ENCODE measurements at regions of chr7 and their contacts with region 1.

Region 1: GRCh38 chr7:101815835-101816493 is 1.5 kb upstream of the CUX1 start:
- DNase-seq: peak; percentile 73
- H3K4me3 Mint-ChIP-seq: peak overlapping the region; percentile 76
- H3K27ac Mint-ChIP-seq: peak overlapping the region; percentile 74
- H3K4me1 Mint-ChIP-seq: peaks cover 20% of the 10 kb centered on the region
- H3K27me3 Mint-ChIP-seq: peaks cover 2% of the 10 kb centered on the region

Region 2: DNA sequence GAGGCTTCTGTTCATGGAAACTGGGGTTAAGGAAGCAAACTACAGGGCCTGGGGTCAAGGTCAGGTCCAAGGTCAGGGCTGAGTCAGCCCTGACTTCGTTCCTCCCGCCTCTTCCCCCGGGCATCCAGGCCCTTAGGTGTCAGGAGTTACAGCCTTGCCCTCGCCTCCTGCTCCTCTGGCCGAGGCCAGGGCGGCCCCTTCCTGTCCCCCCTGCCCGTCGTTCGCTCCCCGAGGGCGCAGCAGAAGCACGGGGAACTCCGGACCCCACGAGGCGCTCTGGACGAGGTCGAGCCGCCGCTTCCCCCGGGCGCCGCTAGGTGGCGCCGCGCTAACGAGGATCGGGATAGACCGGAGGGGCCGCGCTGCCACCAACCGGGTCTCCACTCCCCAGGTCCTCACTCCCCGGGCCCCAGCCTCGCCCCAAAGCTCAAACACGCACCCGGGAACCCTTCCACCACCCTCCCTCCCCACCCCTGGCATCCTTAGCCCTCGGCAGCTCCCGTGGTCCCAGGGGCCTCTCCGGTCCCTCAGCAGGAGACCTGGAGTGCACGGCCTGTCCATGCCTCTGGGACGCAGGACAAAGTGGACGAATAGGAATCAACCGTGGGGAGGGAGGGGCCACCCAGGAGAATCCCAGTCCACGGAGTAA is 127.7 kb before region 1 on chr7:
- CTCF ChIA-PET with region 1: interaction called, 5 read pairs
- POLR2A ChIA-PET with region 1: no interaction called
- intact Hi-C with region 1: loop called (anchors 2 kb)
- DNase-seq: peak; percentile 83
- H3K4me3 Mint-ChIP-seq: no peak overlapping the region
- H3K27ac Mint-ChIP-seq: no peak overlapping the region
- H3K4me1 Mint-ChIP-seq: no peaks in the 10 kb centered on the region
- H3K27me3 Mint-ChIP-seq: peaks cover 1% of the 10 kb centered on the region

Region 3: GRCh38 chr7:101743241-101743994 is 72.5 kb before region 1 on chr7:
- CTCF ChIA-PET with region 1: interaction called, 18 read pairs
- POLR2A ChIA-PET with region 1: interaction called, 3 read pairs
- intact Hi-C with region 1: loop called (anchors 1 kb)
- DNase-seq: peak; percentile 69
- H3K4me3 Mint-ChIP-seq: peak overlapping the region; percentile 69
- H3K27ac Mint-ChIP-seq: no peak overlapping the region
- H3K4me1 Mint-ChIP-seq: peaks cover 9% of the 10 kb centered on the region
- H3K27me3 Mint-ChIP-seq: peaks cover 4% of the 10 kb centered on the region

Region 4: GRCh38 chr7:101856473-101857357 is 40.8 kb after region 1 on chr7:
- CTCF ChIA-PET with region 1: interaction called, 5 read pairs
- POLR2A ChIA-PET with region 1: interaction called, 7 read pairs
- intact Hi-C with region 1: loop called (anchors 1 kb)
- DNase-seq: peak; percentile 90
- H3K4me3 Mint-ChIP-seq: peak overlapping the region; percentile 80
- H3K27ac Mint-ChIP-seq: peak overlapping the region; percentile 93
- H3K4me1 Mint-ChIP-seq: peaks cover 32% of the 10 kb centered on the region
- H3K27me3 Mint-ChIP-seq: no peaks in the 10 kb centered on the region